Psoas muscle (tissue), 8 donors: ENCODE measurements at regions of chr21 and their contacts with region 1.

Region 1: GRCh38 chr21:41777951-41778874 is 11.4 kb upstream of the RIPK4 start:
- DNase-seq: peak; percentile 80 to 86
- ATAC-seq: peak; percentile 69 to 93 (median 82)
- H3K4me3 ChIP-seq: no peak overlapping the region
- H3K27ac ChIP-seq: no peak overlapping the region
- H3K4me1 ChIP-seq: no peaks in the 10 kb centered on the region
- H3K27me3 ChIP-seq: peaks cover 4 to 64% (median 4%) of the 10 kb centered on the region in 3 donors
- CTCF ChIP-seq: peak; percentile 91

Region 2: GRCh38 chr21:41283211-41283818 is 494.9 kb before region 1 on chr21:
- intact Hi-C with region 1: loop called in 1 of 2 experiments (anchors 5 kb)
- DNase-seq: no peak
- ATAC-seq: peak in 3 of 4 donors; percentile 72 to 83 (median 74)
- H3K4me3 ChIP-seq: no peak overlapping the region
- H3K27ac ChIP-seq: no peak overlapping the region
- H3K4me1 ChIP-seq: no peaks in the 10 kb centered on the region
- H3K27me3 ChIP-seq: peaks cover 0 to 18% (median 2%) of the 10 kb centered on the region in 3 donors
- CTCF ChIP-seq: peak; percentile 64

Region 3: DNA sequence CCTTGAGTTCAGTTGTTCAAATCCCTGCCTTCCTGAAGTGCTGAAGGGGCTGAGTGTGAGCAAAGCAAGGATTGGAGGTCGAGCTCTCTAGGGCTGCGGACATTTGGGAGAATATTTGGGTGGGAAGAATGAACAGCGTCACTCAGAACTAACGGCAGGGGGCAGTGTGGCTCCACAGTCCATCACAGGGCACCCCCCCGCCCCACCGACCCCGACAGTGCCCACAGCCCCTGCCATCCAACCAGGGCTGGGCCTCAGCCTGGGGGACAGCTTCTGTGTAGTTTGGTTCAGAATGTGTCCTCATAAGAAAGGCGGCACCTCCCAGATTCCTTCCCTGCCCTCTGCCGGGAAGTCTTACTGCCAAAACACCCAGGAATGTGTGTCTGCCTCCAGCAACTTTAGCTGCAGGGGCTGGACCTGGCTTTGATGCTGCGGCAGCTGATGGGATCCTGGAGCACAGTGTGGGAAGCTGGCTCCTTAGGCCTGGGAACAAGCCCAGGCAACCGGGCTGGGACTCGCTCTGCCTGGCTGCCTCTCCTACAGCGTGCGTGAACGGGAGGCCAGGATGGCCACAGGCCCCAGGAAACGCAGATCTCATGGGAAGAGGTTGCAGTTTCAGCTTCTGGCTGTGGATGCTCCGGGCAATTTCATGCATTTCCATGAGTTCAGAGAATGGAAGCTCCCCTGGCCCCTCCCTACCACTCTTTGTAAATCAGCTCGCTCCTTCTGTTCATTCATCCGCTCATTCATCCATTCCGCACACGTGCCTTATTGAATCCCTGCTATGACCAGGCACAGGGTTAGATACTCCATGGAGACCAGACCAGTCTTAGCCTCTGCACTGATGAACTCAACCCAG is 165.3 kb before region 1 on chr21:
- intact Hi-C with region 1: loop called in 1 of 2 experiments (anchors 5 kb)
- DNase-seq: peak; percentile 83 to 90
- ATAC-seq: peak; percentile 63 to 87 (median 77)
- H3K4me3 ChIP-seq: no peak overlapping the region
- H3K27ac ChIP-seq: peak overlapping the region; percentile 21
- H3K4me1 ChIP-seq: no peaks in the 10 kb centered on the region
- H3K27me3 ChIP-seq: peaks cover 0 to 38% (median 8%) of the 10 kb centered on the region in 3 donors
- CTCF ChIP-seq: peak; percentile 39